MCF 10A (cell line): ENCODE measurements at regions of chr14 and their contacts with region 1.

Region 1: GRCh38 chr14:21103710-21104447 is 3.0 kb downstream of the TMEM253 start:
- DNase-seq: peak; percentile 98
- H3K4me3 Mint-ChIP-seq: peak overlapping the region; percentile 84
- H3K27ac Mint-ChIP-seq: peak overlapping the region; percentile 67
- H3K4me1 Mint-ChIP-seq: peaks cover 52% of the 10 kb centered on the region
- H3K27me3 Mint-ChIP-seq: no peaks in the 10 kb centered on the region
- CTCF ChIP-seq: peak; percentile 58

Region 2: DNA sequence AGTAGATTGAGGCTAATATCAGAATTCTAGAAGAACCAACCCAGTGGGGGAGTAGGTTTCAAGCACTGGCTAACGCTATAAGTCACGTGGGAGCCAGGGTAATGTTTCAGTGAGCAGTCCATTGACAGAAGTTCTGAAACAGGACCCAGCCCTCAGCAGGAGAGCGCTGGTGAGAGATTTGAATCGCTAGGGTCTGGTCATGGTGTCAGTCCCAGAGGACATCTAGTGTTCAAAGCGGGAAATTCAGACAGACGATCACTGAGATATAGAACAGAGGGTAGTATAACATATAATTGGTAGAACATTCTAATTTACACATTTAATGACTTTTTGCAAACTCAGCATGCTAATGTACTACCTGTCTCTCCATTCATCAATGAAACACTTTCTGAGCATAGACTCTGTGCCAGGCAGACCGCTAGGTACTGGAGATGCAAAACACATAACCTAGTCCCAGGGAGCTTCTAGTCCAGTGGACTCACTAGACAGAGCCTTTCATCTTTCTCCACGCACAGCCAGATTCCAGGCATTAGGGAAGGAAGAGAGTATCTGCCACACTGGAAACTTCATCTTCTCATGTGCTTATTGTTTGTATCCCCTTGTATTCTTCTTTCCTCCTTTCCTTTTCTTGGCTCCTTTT is 248.1 kb before region 1 on chr14:
- CTCF ChIA-PET with region 1: no interaction called
- POLR2A ChIA-PET with region 1: no interaction called
- intact Hi-C with region 1: loop called (anchors 5 kb)
- DNase-seq: peak; percentile 75
- H3K4me3 Mint-ChIP-seq: no peak overlapping the region
- H3K27ac Mint-ChIP-seq: no peak overlapping the region
- H3K4me1 Mint-ChIP-seq: peaks cover 5% of the 10 kb centered on the region
- H3K27me3 Mint-ChIP-seq: peaks cover 47% of the 10 kb centered on the region
- CTCF ChIP-seq: peak; percentile 68

Region 3: GRCh38 chr14:21003788-21004346 is 100.0 kb before region 1 on chr14:
- CTCF ChIA-PET with region 1: interaction called, 248 read pairs
- POLR2A ChIA-PET with region 1: no interaction called
- intact Hi-C with region 1: no loop called
- DNase-seq: no peak
- H3K4me3 Mint-ChIP-seq: no peak overlapping the region
- H3K27ac Mint-ChIP-seq: no peak overlapping the region
- H3K4me1 Mint-ChIP-seq: peaks cover 4% of the 10 kb centered on the region
- H3K27me3 Mint-ChIP-seq: no peaks in the 10 kb centered on the region
- CTCF ChIP-seq: no peak

Region 4: GRCh38 chr14:21025371-21026151 is 78.3 kb before region 1 on chr14:
- CTCF ChIA-PET with region 1: interaction called, 11 read pairs
- POLR2A ChIA-PET with region 1: no interaction called
- intact Hi-C with region 1: no loop called
- DNase-seq: no peak
- H3K4me3 Mint-ChIP-seq: peak overlapping the region; percentile 51
- H3K27ac Mint-ChIP-seq: no peak overlapping the region
- H3K4me1 Mint-ChIP-seq: no peaks in the 10 kb centered on the region
- H3K27me3 Mint-ChIP-seq: peaks cover 20% of the 10 kb centered on the region
- CTCF ChIP-seq: no peak

Region 5: DNA sequence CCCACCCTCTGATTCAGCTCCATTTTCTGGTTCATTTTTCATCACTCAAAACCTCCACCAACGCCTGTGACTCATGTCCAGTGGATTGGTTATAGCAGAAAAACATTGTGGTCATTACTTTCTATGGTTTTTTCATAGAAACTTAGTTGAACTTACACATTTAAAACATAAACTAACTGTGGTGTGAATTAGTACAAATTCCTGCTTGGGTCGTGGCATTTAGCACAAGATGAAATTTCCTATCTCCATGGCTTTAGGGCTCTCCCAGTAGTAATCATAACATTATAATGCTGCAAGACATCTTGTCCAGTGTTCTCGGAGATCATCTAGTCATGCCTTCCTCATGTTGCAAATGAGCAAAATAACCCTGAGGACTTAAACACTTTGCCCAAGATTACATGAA is 54.6 kb before region 1 on chr14:
- CTCF ChIA-PET with region 1: interaction called, 26 read pairs
- POLR2A ChIA-PET with region 1: no interaction called
- intact Hi-C with region 1: no loop called
- DNase-seq: no peak
- H3K4me3 Mint-ChIP-seq: no peak overlapping the region
- H3K27ac Mint-ChIP-seq: no peak overlapping the region
- H3K4me1 Mint-ChIP-seq: peaks cover 8% of the 10 kb centered on the region
- H3K27me3 Mint-ChIP-seq: no peaks in the 10 kb centered on the region
- CTCF ChIP-seq: no peak

Region 6: GRCh38 chr14:21071225-21072030 is 32.5 kb before region 1 on chr14:
- CTCF ChIA-PET with region 1: interaction called, 127 read pairs
- POLR2A ChIA-PET with region 1: interaction called, 38 read pairs
- intact Hi-C with region 1: loop called (anchors 1 kb)
- DNase-seq: peak; percentile 64
- H3K4me3 Mint-ChIP-seq: peak overlapping the region; percentile 83
- H3K27ac Mint-ChIP-seq: peak overlapping the region; percentile 54
- H3K4me1 Mint-ChIP-seq: peaks cover 26% of the 10 kb centered on the region
- H3K27me3 Mint-ChIP-seq: no peaks in the 10 kb centered on the region
- CTCF ChIP-seq: no peak

Region 7: GRCh38 chr14:21136024-21136423 is 32.1 kb after region 1 on chr14:
- CTCF ChIA-PET with region 1: interaction called, 11 read pairs
- POLR2A ChIA-PET with region 1: no interaction called
- intact Hi-C with region 1: no loop called
- DNase-seq: peak; percentile 16
- H3K4me3 Mint-ChIP-seq: no peak overlapping the region
- H3K27ac Mint-ChIP-seq: no peak overlapping the region
- H3K4me1 Mint-ChIP-seq: no peaks in the 10 kb centered on the region
- H3K27me3 Mint-ChIP-seq: no peaks in the 10 kb centered on the region
- CTCF ChIP-seq: peak; percentile 74